Heart right ventricle (tissue), 16 donors: ENCODE measurements at regions of chr9 and their contacts with region 1.

Region 1: GRCh38 chr9:71819115-71819739 is 50.9 kb upstream of the CEMIP2 start:
- DNase-seq: peak in 1 of 2 donors; percentile 48
- ATAC-seq: no peak
- H3K4me3 ChIP-seq: no peak overlapping the region
- H3K27ac ChIP-seq: no peak overlapping the region
- H3K4me1 ChIP-seq: peaks cover 0 to 9% (median 0%) of the 10 kb centered on the region in 9 donors
- H3K27me3 ChIP-seq: no peaks in the 10 kb centered on the region
- CTCF ChIP-seq: peak; percentile 64 to 87 (median 78)

Region 2: GRCh38 chr9:71285191-71285656 is 534.0 kb before region 1 on chr9:
- intact Hi-C with region 1: loop called in 1 of 10 experiments (anchors 10 kb)
- DNase-seq: peak in 1 of 2 donors; percentile 46
- ATAC-seq: peak in 7 of 8 donors; percentile 49 to 74 (median 70)
- H3K4me3 ChIP-seq: no peak overlapping the region
- H3K27ac ChIP-seq: no peak overlapping the region
- H3K4me1 ChIP-seq: peaks cover 0 to 8% (median 0%) of the 10 kb centered on the region in 9 donors
- H3K27me3 ChIP-seq: no peaks in the 10 kb centered on the region
- CTCF ChIP-seq: peak; percentile 70 to 89 (median 83)

Region 3: DNA sequence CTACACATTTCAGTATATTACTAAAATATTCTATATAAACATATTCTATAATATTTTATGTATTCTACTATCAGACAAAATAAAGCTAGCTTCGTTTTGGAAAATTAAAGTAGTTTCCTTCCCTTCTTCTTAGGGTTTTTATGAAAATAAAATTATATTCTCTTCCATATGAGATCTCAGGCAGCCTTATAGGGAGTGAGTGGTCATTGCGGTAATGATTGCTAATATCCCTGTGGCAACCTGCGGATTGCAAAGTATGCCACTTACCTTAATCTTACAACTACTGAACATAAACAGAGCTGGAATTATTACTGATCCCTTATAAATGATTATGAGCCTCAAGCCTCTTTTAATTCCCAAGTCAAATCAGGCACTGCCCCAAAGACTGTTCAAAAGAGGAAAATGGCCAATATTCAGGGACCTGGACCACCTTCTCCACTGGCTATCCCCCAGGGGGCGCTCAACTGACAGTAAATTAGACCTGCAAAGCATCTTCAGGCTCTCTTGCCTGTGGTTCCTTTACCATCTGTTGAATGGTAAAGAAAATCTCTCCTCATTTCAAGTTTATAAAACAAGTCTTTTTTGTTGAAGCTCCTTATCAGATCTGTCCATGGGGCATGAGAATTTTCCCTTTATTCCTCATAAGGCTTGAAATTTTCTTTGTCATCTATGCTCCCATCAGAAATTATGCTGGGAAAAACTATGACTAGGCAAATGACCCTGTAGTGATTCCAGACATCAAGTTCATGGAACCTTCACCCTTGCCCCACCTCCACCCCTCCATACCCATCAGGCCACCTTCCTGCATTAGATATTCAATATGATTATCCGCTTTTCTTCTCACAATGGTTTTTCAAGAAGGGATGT is 214.8 kb before region 1 on chr9:
- intact Hi-C with region 1: loop called in 2 of 10 experiments (anchors 2 to 10 kb)
- DNase-seq: peak; percentile 63 to 80
- ATAC-seq: peak; percentile 58 to 91 (median 77)
- H3K4me3 ChIP-seq: no peak overlapping the region
- H3K27ac ChIP-seq: no peak overlapping the region
- H3K4me1 ChIP-seq: no peaks in the 10 kb centered on the region
- H3K27me3 ChIP-seq: no peaks in the 10 kb centered on the region
- CTCF ChIP-seq: peak; percentile 56 to 82 (median 76)

Region 4: DNA sequence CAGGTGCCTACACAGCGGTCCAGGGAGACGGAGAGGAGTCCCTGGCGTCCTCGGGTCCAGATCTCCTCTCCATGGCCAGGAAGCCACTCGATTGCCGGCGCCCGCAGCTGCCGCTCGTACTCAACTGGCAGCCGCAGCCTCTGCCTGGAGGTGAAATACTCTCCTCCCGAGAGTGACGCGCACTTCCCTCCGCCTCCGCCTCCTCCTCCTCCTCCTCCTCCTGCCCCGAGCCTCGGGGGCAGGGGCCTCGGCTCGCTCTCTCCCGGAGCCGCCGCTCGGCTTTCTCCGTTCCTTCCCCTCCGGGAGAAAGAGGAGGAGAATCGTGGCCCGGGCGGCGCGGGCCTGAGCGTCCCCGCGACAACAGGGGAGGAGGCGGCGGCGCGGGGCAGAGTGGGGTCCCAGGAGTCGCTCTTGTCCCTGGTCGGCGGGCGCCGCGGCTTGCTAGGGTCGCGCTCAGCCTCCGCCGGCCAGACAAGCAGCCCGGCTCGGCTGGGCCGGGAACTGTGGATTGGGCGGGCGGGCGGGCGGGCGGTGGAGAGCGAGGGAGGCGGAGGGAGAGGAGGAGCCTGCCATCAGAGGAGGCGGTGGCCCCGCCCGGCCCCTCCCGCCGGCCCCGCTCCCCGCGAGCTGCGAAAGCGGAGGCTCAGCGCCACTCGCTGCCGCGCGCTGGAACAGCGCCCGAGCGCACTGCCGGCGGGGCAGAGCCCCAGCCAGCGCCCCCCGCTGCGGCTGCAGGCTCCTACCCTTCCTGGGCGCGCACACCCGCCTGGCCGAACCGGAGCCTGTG is 50.6 kb before region 1 on chr9 and contains the start of gene CEMIP2:
- intact Hi-C with region 1: loop called in 2 of 10 experiments (anchors 10 kb)
- DNase-seq: peak; percentile 90 to 91
- ATAC-seq: peak; percentile 89 to 98 (median 92)
- H3K4me3 ChIP-seq: peak within 1 kb of the TSS; percentile 50 to 96 (median 88)
- H3K27ac ChIP-seq: peak within 1 kb of the TSS; percentile 92 to 99 (median 98)
- H3K4me1 ChIP-seq: peaks cover 4 to 53% (median 25%) of the 10 kb centered on the region in 9 donors
- H3K27me3 ChIP-seq: peaks cover 0 to 5% (median 0%) of the 10 kb centered on the region in 7 donors
- CTCF ChIP-seq: peak in 7 of 9 donors; percentile 14 to 67 (median 59)
- total RNA-seq, gene CEMIP2: 4.7 to 34.9 (median 11.0) TPM

Region 5: GRCh38 chr9:71830929-71831328 is 11.7 kb after region 1 on chr9:
- intact Hi-C with region 1: no loop called
- DNase-seq: no peak
- ATAC-seq: no peak
- H3K4me3 ChIP-seq: no peak overlapping the region
- H3K27ac ChIP-seq: no peak overlapping the region
- H3K4me1 ChIP-seq: no peaks in the 10 kb centered on the region
- H3K27me3 ChIP-seq: no peaks in the 10 kb centered on the region
- CTCF ChIP-seq: no peak

Region 6: DNA sequence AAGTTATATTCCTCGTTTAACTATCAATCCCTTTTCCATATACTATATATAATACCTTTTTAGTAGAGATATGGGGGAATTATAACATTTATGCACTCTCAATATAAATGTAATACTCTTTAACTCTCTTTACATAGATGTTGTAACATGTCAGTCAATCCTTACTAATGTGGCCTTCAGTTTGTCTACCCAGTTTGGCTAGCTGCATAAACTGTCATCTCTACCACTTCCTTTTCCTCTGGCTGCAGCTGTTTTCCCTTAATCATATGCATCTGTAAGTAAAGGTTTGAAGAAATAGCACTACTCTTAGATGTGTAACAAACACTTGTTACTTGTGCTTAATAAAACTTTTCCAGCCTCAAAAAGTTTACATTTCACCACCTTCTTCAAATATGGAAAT is 78.3 kb after region 1 on chr9:
- intact Hi-C with region 1: loop called in 1 of 10 experiments (anchors 10 kb)
- DNase-seq: no peak
- ATAC-seq: no peak
- H3K4me3 ChIP-seq: no peak overlapping the region
- H3K27ac ChIP-seq: peak overlapping the region in 1 of 10 donors; percentile 62
- H3K4me1 ChIP-seq: peaks cover 0 to 72% (median 22%) of the 10 kb centered on the region in 9 donors
- H3K27me3 ChIP-seq: no peaks in the 10 kb centered on the region
- CTCF ChIP-seq: no peak

Region 7: DNA sequence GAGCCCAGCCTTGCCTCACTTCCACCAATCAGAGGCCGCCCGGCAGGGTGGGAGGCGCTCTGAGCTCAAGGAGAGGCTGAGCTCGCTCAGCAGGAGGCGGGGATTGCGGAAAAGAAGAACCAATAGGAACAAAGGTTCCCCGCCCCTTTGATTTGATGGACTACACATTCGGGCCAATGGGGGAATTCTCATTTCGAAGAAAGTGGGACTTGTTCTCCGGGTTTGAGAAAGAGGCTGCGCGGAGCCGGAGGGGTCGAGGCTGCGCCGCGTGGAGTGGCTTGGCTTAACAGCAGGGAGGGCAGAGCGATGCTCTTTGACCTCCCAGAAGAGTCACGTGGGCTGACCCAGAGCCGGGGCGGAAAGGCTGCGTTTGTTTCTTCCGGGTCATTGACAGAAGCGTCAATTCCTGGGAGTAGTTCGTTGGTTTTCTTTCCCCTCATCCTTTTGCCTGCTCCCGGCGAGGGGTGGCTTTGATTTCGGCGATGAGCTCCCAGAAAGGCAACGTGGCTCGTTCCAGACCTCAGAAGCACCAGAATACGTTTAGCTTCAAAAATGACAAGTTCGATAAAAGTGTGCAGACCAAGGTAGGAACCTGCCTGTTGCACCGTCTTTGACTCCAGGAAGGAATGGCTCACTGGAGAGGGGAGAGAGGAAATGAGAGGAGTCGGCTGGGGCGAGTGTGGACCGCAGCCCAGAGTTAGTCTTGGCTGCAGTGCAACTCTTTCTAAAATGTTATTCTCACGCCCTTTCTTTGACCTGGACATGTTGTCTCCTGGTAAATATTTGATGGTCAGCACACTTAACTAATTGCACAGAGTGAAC is 92.2 kb after region 1 on chr9 and contains the start of gene C9orf85:
- intact Hi-C with region 1: loop called in 3 of 10 experiments (anchors 5 to 10 kb)
- DNase-seq: peak; percentile 98 to 99
- ATAC-seq: peak; percentile 98 to 100 (median 99)
- H3K4me3 ChIP-seq: peak within 1 kb of the TSS; percentile 64 to 99 (median 94)
- H3K27ac ChIP-seq: peak within 1 kb of the TSS; percentile 82 to 98 (median 94)
- H3K4me1 ChIP-seq: peaks cover 0 to 63% (median 46%) of the 10 kb centered on the region in 9 donors
- H3K27me3 ChIP-seq: no peaks in the 10 kb centered on the region
- CTCF ChIP-seq: no peak
- total RNA-seq, gene C9orf85: 3.8 to 8.5 (median 6.1) TPM

Region 8: GRCh38 chr9:72271613-72272478 is 452.6 kb after region 1 on chr9:
- intact Hi-C with region 1: loop called in 1 of 10 experiments (anchors 10 kb)
- DNase-seq: peak in 1 of 2 donors; percentile 55
- ATAC-seq: peak in 1 of 8 donors; percentile 67
- H3K4me3 ChIP-seq: no peak overlapping the region
- H3K27ac ChIP-seq: no peak overlapping the region
- H3K4me1 ChIP-seq: no peaks in the 10 kb centered on the region
- H3K27me3 ChIP-seq: peaks cover 0 to 2% (median 0%) of the 10 kb centered on the region in 7 donors
- CTCF ChIP-seq: peak; percentile 66 to 95 (median 89)